ENCODE measurements at regions of chr10 and their contacts with region 1.

Region 1: GRCh38 chr10:13099666-13100348 is at the start of gene OPTN:
- DNase-seq: peak; percentile 87
- ATAC-seq: peak; percentile 80
- H3K4me3 Mint-ChIP-seq: peak within 1 kb of the TSS; percentile 84
- H3K27ac Mint-ChIP-seq: peak within 1 kb of the TSS; percentile 90
- H3K4me1 Mint-ChIP-seq: peaks cover 37% of the 10 kb centered on the region
- H3K27me3 Mint-ChIP-seq: no peaks in the 10 kb centered on the region
- total RNA-seq, gene OPTN: 57.4 to 67.8 TPM

Region 2: GRCh38 chr10:12042797-12043651 is 1056.8 kb before region 1 on chr10 and contains the start of gene UPF2:
- CTCF ChIA-PET with region 1: no interaction called
- POLR2A ChIA-PET with region 1: no interaction called
- intact Hi-C with region 1: loop called in 1 of 2 experiments (anchors 2 kb)
- DNase-seq: peak; percentile 99
- ATAC-seq: peak; percentile 90
- H3K4me3 Mint-ChIP-seq: peak within 1 kb of the TSS; percentile 99
- H3K27ac Mint-ChIP-seq: peak within 1 kb of the TSS; percentile 100
- H3K4me1 Mint-ChIP-seq: peaks cover 37% of the 10 kb centered on the region
- H3K27me3 Mint-ChIP-seq: peaks cover 2% of the 10 kb centered on the region
- total RNA-seq, gene UPF2: 34.2 to 46.8 TPM

Region 3: GRCh38 chr10:12221323-12222298 is 878.2 kb before region 1 on chr10:
- CTCF ChIA-PET with region 1: no interaction called
- POLR2A ChIA-PET with region 1: interaction called, 11 read pairs
- intact Hi-C with region 1: no loop called
- DNase-seq: peak; percentile 18
- ATAC-seq: peak; percentile 30
- H3K4me3 Mint-ChIP-seq: no peak overlapping the region
- H3K27ac Mint-ChIP-seq: peak overlapping the region; percentile 51
- H3K4me1 Mint-ChIP-seq: peaks cover 1% of the 10 kb centered on the region
- H3K27me3 Mint-ChIP-seq: no peaks in the 10 kb centered on the region

Region 4: GRCh38 chr10:12782537-12782936 is 317.3 kb before region 1 on chr10:
- CTCF ChIA-PET with region 1: interaction called, 3 read pairs
- POLR2A ChIA-PET with region 1: no interaction called
- intact Hi-C with region 1: loop called in 1 of 2 experiments (anchors 5 kb)
- DNase-seq: peak; percentile 65
- ATAC-seq: no peak
- H3K4me3 Mint-ChIP-seq: no peak overlapping the region
- H3K27ac Mint-ChIP-seq: peak overlapping the region; percentile 48
- H3K4me1 Mint-ChIP-seq: peaks cover 38% of the 10 kb centered on the region
- H3K27me3 Mint-ChIP-seq: no peaks in the 10 kb centered on the region

Region 5: DNA sequence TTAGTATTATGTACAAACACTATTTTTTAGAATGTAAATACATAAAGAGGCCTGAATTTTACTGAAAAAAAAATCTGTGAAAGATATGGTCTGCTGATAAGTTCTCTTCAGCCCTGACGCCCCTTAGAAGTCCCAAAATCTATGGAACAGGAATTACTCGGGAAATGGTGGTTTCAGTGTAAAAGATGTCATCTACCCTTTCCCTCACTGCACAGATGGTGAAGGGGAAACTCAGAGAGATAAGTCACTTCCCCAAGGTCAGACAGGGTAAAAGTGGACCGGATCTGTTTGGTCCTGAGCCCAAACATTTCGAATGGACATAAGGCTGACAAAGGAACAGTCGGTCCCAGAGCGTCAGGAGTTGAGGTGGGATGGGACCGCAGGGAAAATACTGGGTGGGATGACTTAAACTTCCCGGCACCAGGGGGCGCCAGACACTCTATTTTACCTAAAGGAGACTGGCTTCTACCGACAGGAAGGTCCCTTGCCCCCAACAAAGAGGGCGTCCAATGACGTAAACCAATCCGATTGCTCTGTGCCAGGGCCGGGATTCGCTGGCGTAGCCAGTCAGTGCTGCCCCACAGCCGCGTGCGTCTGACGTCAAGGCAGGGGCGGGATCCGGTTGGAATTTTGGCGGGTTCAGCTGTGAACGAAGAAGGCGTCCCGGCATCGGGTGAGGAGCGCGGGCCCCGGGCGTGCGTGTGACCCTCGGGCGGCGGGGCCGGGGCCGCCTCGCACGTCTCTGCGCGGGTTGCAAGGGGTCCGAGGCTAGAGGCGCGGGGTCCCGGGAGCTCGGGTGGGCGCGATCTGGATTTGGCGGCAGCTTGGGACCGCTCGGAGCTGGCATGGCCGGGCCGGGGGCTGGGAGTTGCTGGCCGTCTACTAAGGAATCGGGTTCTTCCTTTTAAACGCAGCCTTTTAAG is 61.4 kb after region 1 on chr10 and contains the start of gene MCM10:
- CTCF ChIA-PET with region 1: no interaction called
- POLR2A ChIA-PET with region 1: no interaction called
- intact Hi-C with region 1: loop called (anchors 1 to 5 kb)
- DNase-seq: peak; percentile 98
- ATAC-seq: peak; percentile 100
- H3K4me3 Mint-ChIP-seq: peak within 1 kb of the TSS; percentile 91
- H3K27ac Mint-ChIP-seq: peak within 1 kb of the TSS; percentile 86
- H3K4me1 Mint-ChIP-seq: peaks cover 26% of the 10 kb centered on the region
- H3K27me3 Mint-ChIP-seq: no peaks in the 10 kb centered on the region
- total RNA-seq, gene MCM10: 86.0 to 86.2 TPM